A673 (cell line): ENCODE measurements at regions of chr9 and their contacts with region 1.

Region 1: DNA sequence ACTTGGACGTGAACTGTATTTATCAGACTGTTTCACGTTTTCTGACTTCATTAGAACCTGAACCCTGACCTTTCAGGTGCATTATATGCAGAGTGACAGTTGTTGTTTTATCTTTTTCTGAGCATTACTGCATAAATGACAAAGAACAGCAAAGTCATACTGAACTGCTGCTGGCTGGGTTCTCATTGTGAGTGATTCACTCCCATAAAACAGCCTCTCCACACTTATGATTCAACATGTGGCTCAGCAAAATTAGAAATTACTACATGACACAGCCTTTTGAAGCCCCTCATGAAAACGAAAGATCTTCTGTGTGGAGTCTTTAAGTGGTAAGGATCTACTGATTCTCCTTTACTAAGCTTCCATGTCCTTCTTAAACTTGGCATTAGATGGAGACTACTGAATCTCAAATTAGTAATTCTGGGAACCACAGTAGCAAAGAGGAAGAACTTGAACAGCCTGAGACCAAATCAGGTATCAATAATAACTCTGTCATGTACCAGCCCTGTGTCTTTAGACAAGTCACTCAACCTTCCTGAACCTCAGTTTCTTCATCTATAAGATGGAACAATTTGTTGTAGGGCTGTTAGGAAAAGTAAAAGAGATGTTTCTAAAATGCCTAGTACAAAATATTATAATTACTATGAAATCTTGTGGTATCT is 172.3 kb upstream of the GNA14 start:
- DNase-seq: peak; percentile 66
- H3K4me3 ChIP-seq: no peak overlapping the region
- H3K27ac ChIP-seq: peak overlapping the region; percentile 43
- H3K4me1 ChIP-seq: peaks cover 31% of the 10 kb centered on the region
- H3K27me3 ChIP-seq: no peaks in the 10 kb centered on the region
- CTCF ChIP-seq: no peak

Region 2: DNA sequence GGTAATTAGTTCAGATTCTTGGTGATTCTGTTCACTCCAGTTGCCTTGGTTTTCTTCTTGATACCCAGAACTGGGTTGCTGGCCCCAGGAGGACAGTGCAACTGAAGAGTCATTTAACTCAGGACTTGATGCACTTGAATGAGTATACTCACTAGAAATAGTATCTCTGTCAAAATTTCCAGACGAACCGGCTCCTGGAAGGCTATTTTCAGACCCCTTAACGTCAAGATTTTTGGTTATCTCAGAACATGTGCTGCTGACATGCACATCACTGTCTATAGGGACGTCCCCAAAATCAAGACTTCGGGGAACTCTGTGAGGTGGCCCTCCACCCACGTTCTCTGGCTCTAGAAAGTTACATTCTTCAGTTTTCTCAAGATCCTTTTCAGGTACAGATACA is 1112.9 kb before region 1 on chr9:
- CTCF ChIA-PET with region 1: no interaction called
- POLR2A ChIA-PET with region 1: no interaction called
- intact Hi-C with region 1: no loop called
- DNase-seq: no peak
- H3K4me3 ChIP-seq: no peak overlapping the region
- H3K27ac ChIP-seq: no peak overlapping the region
- H3K4me1 ChIP-seq: no peaks in the 10 kb centered on the region
- H3K27me3 ChIP-seq: peaks cover 73% of the 10 kb centered on the region
- CTCF ChIP-seq: no peak

Region 3: GRCh38 chr9:77884395-77884851 is 64.0 kb after region 1 on chr9:
- CTCF ChIA-PET with region 1: no interaction called
- POLR2A ChIA-PET with region 1: interaction called, 21 read pairs
- intact Hi-C with region 1: no loop called
- DNase-seq: no peak
- H3K4me3 ChIP-seq: no peak overlapping the region
- H3K27ac ChIP-seq: no peak overlapping the region
- H3K4me1 ChIP-seq: peaks cover 15% of the 10 kb centered on the region
- H3K27me3 ChIP-seq: no peaks in the 10 kb centered on the region
- CTCF ChIP-seq: no peak

Region 4: DNA sequence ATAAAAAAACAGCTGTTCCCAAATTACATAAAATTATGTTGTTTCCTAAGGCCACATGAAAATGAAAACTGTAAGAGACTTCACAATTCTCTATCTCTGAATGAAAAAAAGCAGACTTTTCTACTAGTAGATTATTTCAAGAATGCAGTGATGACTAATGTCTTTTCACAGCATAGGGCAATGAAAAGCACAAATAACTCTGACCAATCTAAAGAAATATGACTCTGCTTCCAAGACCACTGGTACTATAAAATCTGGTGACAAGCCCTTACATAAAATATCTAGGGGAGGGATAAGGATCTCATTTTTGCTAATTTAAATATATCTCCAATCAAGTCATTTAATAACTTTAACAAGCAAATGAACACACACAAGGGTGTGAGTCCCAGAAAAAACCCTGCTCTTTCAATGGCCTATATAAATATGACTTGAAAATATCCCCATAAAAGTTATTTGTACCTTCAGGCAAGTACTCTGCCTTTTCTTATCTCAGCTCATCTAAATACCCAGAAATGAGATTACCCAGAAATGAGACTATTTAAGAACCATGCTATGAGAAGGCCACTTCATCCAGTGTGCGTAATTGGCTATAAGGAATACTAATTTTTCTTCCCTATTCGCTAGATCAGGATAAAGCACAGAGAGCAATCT is 106.0 kb after region 1 on chr9:
- CTCF ChIA-PET with region 1: no interaction called
- POLR2A ChIA-PET with region 1: interaction called, 14 read pairs
- intact Hi-C with region 1: no loop called
- DNase-seq: peak; percentile 53
- H3K4me3 ChIP-seq: no peak overlapping the region
- H3K27ac ChIP-seq: peak overlapping the region; percentile 4
- H3K4me1 ChIP-seq: peaks cover 21% of the 10 kb centered on the region
- H3K27me3 ChIP-seq: no peaks in the 10 kb centered on the region
- CTCF ChIP-seq: no peak